ENCODE measurements at regions of chr6 and their contacts with region 1.

Region 1: GRCh38 chr6:27132532-27133280 is 114.8 kb upstream of the PRSS16 start:
- DNase-seq: peak; percentile 98
- H3K4me3 ChIP-seq: peak overlapping the region; percentile 79
- H3K27ac ChIP-seq: peak overlapping the region; percentile 99
- H3K4me1 ChIP-seq: peaks cover 74% of the 10 kb centered on the region
- CTCF ChIP-seq: no peak

Region 2: DNA sequence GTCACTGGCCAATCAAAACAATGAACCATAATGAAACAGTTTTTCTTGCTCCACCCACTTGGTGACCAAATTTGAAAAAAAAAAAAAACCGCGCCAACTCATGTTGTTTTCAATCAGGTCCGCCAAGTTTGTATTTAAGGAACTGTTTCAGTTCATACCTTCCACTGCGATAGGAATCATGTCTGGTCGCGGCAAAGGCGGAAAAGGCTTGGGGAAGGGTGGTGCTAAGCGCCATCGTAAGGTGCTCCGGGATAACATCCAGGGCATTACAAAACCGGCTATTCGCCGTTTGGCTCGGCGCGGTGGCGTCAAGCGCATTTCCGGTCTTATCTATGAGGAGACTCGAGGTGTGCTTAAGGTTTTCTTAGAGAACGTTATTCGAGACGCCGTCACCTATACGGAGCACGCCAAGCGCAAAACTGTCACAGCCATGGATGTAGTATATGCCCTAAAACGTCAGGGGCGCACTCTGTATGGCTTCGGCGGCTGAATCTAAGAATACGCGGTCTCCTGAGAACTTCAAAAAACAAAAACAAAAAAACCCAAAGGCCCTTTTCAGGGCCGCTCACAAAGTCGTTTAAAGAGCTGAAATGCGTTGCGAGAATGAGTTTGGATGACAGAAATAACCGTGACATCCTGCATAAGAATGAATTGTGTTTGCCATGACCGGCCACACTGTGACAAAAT is 1028.8 kb before region 1 on chr6:
- CTCF ChIA-PET with region 1: no interaction called
- POLR2A ChIA-PET with region 1: no interaction called
- intact Hi-C with region 1: loop called (anchors 5 kb)
- DNase-seq: peak; percentile 94
- H3K4me3 ChIP-seq: peak overlapping the region; percentile 66
- H3K27ac ChIP-seq: peak overlapping the region; percentile 96
- H3K4me1 ChIP-seq: peaks cover 25% of the 10 kb centered on the region
- CTCF ChIP-seq: peak; percentile 65

Region 3: GRCh38 chr6:26285143-26286134 is 847.3 kb before region 1 on chr6:
- CTCF ChIA-PET with region 1: no interaction called
- POLR2A ChIA-PET with region 1: interaction called, 4 read pairs
- intact Hi-C with region 1: loop called (anchors 2 kb)
- DNase-seq: peak; percentile 99
- H3K4me3 ChIP-seq: peak overlapping the region; percentile 80
- H3K27ac ChIP-seq: peak overlapping the region; percentile 96
- H3K4me1 ChIP-seq: peaks cover 32% of the 10 kb centered on the region
- CTCF ChIP-seq: 0 out of 2 replicates have a peak, but pooled peaks have one; percentile 0

Region 4: DNA sequence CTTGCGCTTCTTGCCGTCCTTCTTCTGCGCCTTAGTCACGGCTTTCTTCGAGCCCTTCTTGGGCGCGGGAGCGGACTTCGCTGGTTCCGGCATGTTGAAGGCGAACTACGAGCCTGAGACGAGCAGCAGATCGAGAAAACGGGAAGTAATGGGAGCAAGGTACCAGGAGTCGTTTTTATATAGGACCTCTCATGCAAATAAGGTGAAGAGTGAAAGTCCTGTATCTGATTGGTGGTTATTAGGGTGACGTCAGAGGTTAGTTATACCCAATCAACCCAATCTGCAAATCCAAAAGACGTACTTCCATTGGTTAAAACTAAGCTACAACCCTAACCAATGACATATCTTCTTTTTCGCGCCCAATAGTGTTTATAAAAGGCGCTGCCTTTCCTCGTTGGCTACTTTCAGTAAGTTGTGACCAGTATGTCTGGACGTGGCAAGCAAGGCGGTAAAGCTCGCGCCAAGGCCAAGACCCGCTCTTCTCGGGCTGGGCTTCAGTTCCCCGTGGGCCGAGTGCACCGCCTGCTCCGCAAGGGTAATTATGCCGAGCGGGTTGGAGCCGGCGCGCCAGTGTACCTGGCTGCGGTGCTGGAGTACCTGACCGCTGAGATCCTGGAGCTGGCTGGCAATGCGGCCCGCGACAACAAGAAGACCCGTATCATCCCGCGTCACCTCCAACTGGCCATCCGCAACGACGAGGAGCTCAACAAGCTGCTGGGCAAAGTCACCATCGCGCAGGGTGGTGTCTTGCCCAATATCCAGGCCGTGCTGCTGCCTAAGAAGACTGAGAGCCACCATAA is 14.2 kb after region 1 on chr6:
- CTCF ChIA-PET with region 1: interaction called, 3 read pairs
- POLR2A ChIA-PET with region 1: interaction called, 235 read pairs
- intact Hi-C with region 1: loop called (anchors 1 kb)
- DNase-seq: peak; percentile 98
- H3K4me3 ChIP-seq: peak overlapping the region; percentile 73
- H3K27ac ChIP-seq: peak overlapping the region; percentile 99
- H3K4me1 ChIP-seq: peaks cover 60% of the 10 kb centered on the region
- CTCF ChIP-seq: no peak

Region 5: GRCh38 chr6:27871924-27872638 is 739.4 kb after region 1 on chr6:
- CTCF ChIA-PET with region 1: interaction called, 3 read pairs
- POLR2A ChIA-PET with region 1: interaction called, 34 read pairs
- intact Hi-C with region 1: loop called (anchors 2 kb)
- DNase-seq: peak; percentile 95
- H3K4me3 ChIP-seq: peak overlapping the region; percentile 69
- H3K27ac ChIP-seq: peak overlapping the region; percentile 99
- H3K4me1 ChIP-seq: peaks cover 71% of the 10 kb centered on the region
- CTCF ChIP-seq: peak; percentile 44